Activated B cell treated with CpG ODN at 0.5 μM for 24 hours (primary cell): ENCODE measurements at regions of chr12 and their contacts with region 1.

Region 1: DNA sequence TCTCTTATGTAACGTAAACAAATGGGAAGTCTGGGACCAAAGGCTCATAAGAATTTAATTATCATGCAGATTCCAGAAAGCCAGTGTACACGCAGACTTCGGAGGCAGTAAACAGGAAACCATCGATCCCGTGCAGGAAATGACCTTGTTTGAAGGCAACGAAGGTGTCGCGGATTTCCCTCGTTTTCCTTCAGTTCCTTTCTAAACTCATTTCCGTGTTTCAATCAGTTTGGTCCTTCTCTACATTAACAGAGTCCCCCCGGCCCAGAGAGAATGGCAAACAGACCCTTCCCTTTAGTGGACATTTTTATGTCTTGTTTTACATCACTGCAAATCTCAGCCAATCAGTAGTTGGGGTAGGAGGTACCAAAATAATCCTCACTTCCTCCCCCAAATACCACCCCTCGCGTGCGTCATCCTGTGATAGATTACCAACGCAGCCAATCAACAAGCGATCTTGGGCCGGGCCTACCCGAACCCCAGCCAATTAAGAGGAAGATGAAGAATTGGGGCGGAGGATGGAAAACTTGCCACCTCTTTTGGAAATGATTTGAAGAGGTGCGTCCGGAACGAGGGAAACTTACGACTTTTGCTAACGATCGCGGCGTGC is 6.1 kb upstream of the FOXJ2 start:
- DNase-seq: peak; percentile 80
- ATAC-seq: peak; percentile 96
- H3K4me3 Mint-ChIP-seq: peak overlapping the region; percentile 98
- H3K27ac Mint-ChIP-seq: peak overlapping the region; percentile 100
- H3K4me1 Mint-ChIP-seq: peaks cover 13% of the 10 kb centered on the region
- H3K27me3 Mint-ChIP-seq: no peaks in the 10 kb centered on the region
- CTCF ChIP-seq: no peak

Region 2: GRCh38 chr12:7188562-7189397 is 837.6 kb before region 1 on chr12:
- CTCF ChIA-PET with region 1: no interaction called
- POLR2A ChIA-PET with region 1: interaction called, 3 read pairs
- intact Hi-C with region 1: loop called (anchors 2 kb)
- DNase-seq: peak; percentile 46
- ATAC-seq: peak; percentile 39
- H3K4me3 Mint-ChIP-seq: peak overlapping the region; percentile 92
- H3K27ac Mint-ChIP-seq: peak overlapping the region; percentile 91
- H3K4me1 Mint-ChIP-seq: peaks cover 31% of the 10 kb centered on the region
- H3K27me3 Mint-ChIP-seq: no peaks in the 10 kb centered on the region
- CTCF ChIP-seq: no peak

Region 3: DNA sequence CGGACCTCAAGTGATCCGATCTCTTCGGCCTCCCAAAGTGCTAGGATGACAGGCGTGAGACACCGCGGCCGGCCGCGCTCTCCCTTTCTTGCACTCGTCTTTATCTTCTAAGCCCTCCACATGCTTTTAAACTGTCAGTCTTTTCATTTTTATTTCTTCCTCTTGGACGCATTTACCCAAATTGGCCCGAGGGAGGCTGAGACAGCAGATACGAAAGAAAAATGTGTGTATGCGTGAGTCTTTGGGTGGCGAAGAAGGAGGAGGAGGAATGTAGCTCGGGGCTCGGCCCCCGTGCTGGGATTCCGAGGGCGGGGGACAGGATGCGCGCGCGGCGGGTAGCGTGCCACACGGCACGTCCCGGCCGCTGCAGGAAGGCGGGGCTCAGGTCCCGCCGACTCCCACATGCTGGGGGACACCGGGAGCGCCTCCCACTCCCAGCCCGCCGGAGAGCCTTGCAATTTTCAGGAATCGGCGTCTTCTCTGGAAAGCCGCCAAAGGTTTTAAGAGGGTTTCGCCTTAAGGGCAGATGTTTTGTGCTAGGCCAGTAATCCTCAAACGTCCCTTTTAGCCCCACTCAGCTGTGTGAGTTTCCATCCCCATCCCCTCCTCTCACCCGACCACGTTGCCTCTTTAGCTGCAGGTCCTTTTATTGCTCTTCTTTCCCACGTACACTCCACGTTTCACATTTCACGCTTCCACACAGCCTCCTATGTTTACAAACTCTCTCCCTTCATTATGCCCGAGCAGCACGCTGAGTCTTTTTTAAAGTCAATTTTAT is 55.7 kb before region 1 on chr12:
- CTCF ChIA-PET with region 1: no interaction called
- POLR2A ChIA-PET with region 1: interaction called, 5 read pairs
- intact Hi-C with region 1: loop called (anchors 2 kb)
- DNase-seq: peak; percentile 73
- ATAC-seq: peak; percentile 93
- H3K4me3 Mint-ChIP-seq: peak overlapping the region; percentile 81
- H3K27ac Mint-ChIP-seq: peak overlapping the region; percentile 90
- H3K4me1 Mint-ChIP-seq: peaks cover 32% of the 10 kb centered on the region
- H3K27me3 Mint-ChIP-seq: no peaks in the 10 kb centered on the region
- CTCF ChIP-seq: no peak

Region 4: DNA sequence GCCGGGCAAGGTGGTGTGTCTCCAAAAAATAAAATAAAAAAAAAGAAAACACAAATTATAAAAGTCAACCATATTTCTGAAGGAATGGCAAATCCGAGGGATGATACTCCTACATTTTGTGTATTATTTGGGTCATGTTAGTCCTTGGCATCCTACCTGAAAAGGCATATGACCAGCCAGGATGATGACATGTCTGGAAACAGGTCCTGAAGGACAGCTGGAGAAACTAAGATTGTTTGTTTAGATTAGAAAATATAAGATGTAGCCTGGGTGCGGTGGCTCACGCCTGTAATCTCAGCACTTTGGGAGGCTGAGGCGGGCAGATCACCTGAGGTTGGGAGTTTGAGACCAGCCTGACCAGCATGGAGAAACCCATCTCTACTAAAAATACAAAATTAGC is 41.5 kb before region 1 on chr12:
- CTCF ChIA-PET with region 1: no interaction called
- POLR2A ChIA-PET with region 1: no interaction called
- intact Hi-C with region 1: no loop called
- DNase-seq: no peak
- ATAC-seq: no peak
- H3K4me3 Mint-ChIP-seq: no peak overlapping the region
- H3K27ac Mint-ChIP-seq: no peak overlapping the region
- H3K4me1 Mint-ChIP-seq: peaks cover 2% of the 10 kb centered on the region
- H3K27me3 Mint-ChIP-seq: no peaks in the 10 kb centered on the region
- CTCF ChIP-seq: no peak

Region 5: DNA sequence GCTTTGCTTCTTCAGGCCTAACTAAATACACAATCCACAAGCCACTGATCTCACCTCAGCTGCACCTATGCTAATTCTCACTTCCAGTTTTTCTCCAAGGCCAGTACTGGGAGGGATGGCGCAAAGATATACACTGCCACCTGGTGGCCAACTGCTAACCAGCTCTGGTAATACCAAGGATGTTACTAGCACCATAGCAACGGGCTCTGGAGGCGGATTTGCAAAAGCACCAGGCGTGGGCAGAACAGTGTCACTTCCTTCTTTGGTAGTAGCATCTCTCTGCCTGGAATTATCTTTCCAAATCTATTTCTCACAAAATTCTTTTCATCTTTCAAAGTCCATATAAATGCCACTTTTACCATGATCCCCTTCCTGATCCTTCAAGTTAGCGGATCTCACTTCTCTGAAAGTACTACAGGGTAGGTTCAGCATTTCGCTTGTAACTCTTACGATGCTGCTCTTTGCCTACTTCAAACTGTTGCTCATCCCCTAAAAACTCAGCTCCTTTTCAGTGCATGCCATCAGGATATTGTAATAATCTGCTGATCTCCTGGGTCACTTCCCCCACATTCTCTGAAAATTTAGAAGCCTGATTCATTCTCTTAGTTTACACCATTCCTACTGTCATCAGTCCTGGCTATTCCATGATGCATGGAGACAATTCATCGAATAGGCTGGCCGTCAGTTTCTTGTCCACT is 31.0 kb before region 1 on chr12:
- CTCF ChIA-PET with region 1: no interaction called
- POLR2A ChIA-PET with region 1: interaction called, 4 read pairs
- intact Hi-C with region 1: loop called (anchors 1 kb)
- DNase-seq: peak; percentile 50
- ATAC-seq: peak; percentile 99
- H3K4me3 Mint-ChIP-seq: no peak overlapping the region
- H3K27ac Mint-ChIP-seq: no peak overlapping the region
- H3K4me1 Mint-ChIP-seq: peaks cover 3% of the 10 kb centered on the region
- H3K27me3 Mint-ChIP-seq: no peaks in the 10 kb centered on the region
- CTCF ChIP-seq: peak; percentile 53

Region 6: DNA sequence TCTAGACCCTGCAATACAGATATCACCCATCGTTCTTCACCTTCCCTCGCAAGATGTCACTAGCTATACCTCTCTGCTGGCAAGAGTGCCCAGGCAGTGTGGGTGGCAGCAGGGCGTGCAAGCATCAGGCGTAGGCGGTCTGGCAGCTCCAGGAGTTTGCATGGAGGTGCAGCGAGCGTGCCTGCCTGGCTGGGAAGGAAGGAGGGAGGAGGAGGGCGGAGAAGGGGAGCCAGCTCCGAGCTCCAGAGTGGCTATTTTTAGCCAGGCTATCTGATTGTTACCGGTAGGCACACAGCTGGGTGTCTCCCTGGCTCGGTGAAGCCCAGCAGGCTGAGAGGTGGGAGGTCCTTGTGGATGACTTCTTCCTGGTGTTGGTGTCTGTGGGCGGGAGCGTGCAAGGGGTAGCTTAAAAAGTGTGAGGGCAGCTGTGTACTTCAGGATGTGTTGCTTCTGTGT is 12.3 kb after region 1 on chr12:
- CTCF ChIA-PET with region 1: no interaction called
- POLR2A ChIA-PET with region 1: interaction called, 20 read pairs
- intact Hi-C with region 1: loop called (anchors 1 kb)
- DNase-seq: no peak
- ATAC-seq: no peak
- H3K4me3 Mint-ChIP-seq: no peak overlapping the region
- H3K27ac Mint-ChIP-seq: no peak overlapping the region
- H3K4me1 Mint-ChIP-seq: peaks cover 60% of the 10 kb centered on the region
- H3K27me3 Mint-ChIP-seq: no peaks in the 10 kb centered on the region
- CTCF ChIP-seq: no peak

Region 7: GRCh38 chr12:8078398-8078797 is 52.0 kb after region 1 on chr12:
- CTCF ChIA-PET with region 1: interaction called, 4 read pairs
- POLR2A ChIA-PET with region 1: interaction called, 9 read pairs
- intact Hi-C with region 1: loop called (anchors 1 kb)
- DNase-seq: no peak
- ATAC-seq: no peak
- H3K4me3 Mint-ChIP-seq: no peak overlapping the region
- H3K27ac Mint-ChIP-seq: no peak overlapping the region
- H3K4me1 Mint-ChIP-seq: peaks cover 38% of the 10 kb centered on the region
- H3K27me3 Mint-ChIP-seq: peaks cover under 1% of the 10 kb centered on the region
- CTCF ChIP-seq: no peak

Region 8: GRCh38 chr12:9079883-9080675 is 1053.7 kb after region 1 on chr12:
- CTCF ChIA-PET with region 1: no interaction called
- POLR2A ChIA-PET with region 1: no interaction called
- intact Hi-C with region 1: no loop called
- DNase-seq: no peak
- ATAC-seq: no peak
- H3K4me3 Mint-ChIP-seq: no peak overlapping the region
- H3K27ac Mint-ChIP-seq: no peak overlapping the region
- H3K4me1 Mint-ChIP-seq: no peaks in the 10 kb centered on the region
- H3K27me3 Mint-ChIP-seq: peaks cover 11% of the 10 kb centered on the region
- CTCF ChIP-seq: no peak